ENCODE measurements at regions of chr17 and their contacts with region 1.

Region 1: DNA sequence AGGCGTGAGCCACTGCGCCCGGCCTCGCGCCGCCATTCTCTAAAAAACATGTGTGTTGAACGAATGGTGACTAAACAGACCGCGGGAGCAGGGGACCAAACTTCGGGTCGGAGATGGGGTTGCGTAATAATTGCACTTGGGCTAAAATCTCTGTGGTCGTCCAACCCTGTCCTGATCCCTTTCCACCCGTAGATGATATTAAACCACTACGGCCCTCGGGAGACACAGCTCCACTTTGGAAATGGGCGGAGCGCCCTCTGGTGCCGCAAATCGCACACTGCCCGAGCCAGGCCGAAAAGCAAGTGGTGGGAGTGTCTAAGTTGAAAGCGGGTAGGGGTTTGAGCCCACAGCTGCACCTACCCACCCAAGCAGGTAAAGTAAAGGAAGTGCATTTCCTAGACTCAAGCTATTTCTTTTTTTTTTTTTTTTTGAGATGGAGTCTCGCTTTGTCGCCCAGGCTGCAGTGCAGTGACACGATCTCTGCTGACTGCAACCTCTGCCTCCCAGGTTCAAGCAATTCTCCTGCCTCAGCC is 17.0 kb downstream of the CAVIN1 start:
- DNase-seq: peak; percentile 69 to 89 (median 84)
- H3K4me3 ChIP-seq: no peak overlapping the region
- H3K27ac ChIP-seq: no peak overlapping the region
- H3K4me1 ChIP-seq: peaks cover 32% of the 10 kb centered on the region
- H3K27me3 ChIP-seq: no peaks in the 10 kb centered on the region
- CTCF ChIP-seq: peak; percentile 70 to 91 (median 78)
- EP300 ChIP-seq: no peak
- POLR2A ChIP-seq: no peak

Region 2: DNA sequence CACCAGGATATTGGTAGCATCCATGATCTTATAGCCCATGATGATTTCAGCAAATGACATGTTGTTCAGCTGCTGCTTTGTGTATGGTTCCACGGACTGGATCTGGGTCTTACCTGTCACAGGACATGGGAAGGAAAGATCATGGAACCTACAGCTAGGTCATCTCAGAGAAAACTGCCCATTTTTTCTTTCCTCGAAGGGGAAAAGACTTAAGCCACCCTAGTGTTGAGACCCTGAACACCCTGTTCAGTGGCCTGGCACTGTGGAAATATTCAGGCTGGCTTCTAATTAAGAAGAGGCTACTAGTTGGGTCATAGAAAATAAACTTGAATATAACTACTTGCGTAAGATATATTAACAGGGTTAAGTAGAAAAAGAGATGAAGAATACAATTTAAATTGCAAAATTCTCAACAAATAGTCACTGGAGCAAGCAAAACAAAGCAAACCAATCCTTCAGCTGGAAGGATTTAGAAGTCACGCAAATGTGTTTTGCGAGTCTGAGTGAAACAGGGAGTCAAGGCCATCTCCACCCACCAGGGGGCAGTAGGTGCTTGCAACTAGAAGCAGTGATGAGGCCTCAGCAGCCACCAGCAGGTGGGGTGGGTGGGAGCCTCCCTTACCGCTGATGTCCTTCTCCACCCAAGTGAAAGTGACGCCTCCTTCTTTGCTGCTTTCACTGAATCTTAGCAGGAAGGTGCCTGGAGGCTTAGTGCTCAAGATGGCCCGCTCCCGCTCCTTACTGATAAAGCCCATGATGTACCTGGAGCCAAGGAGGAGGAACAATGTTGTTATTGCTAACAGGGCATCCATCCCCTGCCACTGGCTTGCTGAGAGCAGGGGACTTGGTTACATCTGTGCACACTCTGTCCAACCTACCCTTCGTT is 83.4 kb before region 1 on chr17:
- intact Hi-C with region 1: loop called (anchors 1 to 5 kb)
- DNase-seq: peak; percentile 90 to 96 (median 94)
- H3K4me3 ChIP-seq: no peak overlapping the region
- H3K27ac ChIP-seq: no peak overlapping the region
- H3K4me1 ChIP-seq: peaks cover 3% of the 10 kb centered on the region
- H3K27me3 ChIP-seq: no peaks in the 10 kb centered on the region
- CTCF ChIP-seq: peak; percentile 96 to 100 (median 99)
- EP300 ChIP-seq: no peak
- POLR2A ChIP-seq: peak; percentile 42

Region 3: GRCh38 chr17:42347198-42347597 is 58.8 kb before region 1 on chr17:
- intact Hi-C with region 1: no loop called
- DNase-seq: peak in 2 of 5 donors; percentile 35 to 73
- H3K4me3 ChIP-seq: no peak overlapping the region
- H3K27ac ChIP-seq: no peak overlapping the region
- H3K4me1 ChIP-seq: peaks cover 6% of the 10 kb centered on the region
- H3K27me3 ChIP-seq: no peaks in the 10 kb centered on the region
- CTCF ChIP-seq: no peak
- EP300 ChIP-seq: no peak
- POLR2A ChIP-seq: no peak

Region 4: DNA sequence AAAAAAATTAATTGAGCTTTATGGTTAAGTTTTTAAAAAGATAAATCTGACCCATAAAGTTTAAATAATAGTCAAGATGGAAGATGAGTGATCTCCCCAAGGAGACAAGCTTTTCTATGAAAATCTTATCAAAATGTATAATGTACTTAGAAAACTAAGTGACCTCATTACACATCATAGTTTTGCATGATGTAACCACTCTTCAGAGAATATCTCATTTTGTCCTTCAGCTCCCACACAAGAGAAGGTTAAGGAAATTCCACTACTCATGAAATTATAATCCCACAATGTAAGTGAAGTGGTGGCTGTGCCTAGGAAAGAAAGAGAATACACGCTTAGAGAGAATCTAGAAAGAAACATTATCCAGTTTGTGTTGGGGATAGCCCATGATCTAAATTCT is 32.1 kb before region 1 on chr17:
- intact Hi-C with region 1: no loop called
- DNase-seq: no peak
- H3K4me3 ChIP-seq: no peak overlapping the region
- H3K27ac ChIP-seq: no peak overlapping the region
- H3K4me1 ChIP-seq: peaks cover 3% of the 10 kb centered on the region
- H3K27me3 ChIP-seq: no peaks in the 10 kb centered on the region
- CTCF ChIP-seq: no peak
- EP300 ChIP-seq: no peak
- POLR2A ChIP-seq: no peak